Activated B cell treated with CpG ODN at 0.5 μM for 24 hours (primary cell): ENCODE measurements at regions of chr10 and their contacts with region 1.

Region 1: GRCh38 chr10:44857363-44858016 is 53.6 kb upstream of the TMEM72 start:
- DNase-seq: peak; percentile 38
- ATAC-seq: peak; percentile 78
- H3K4me3 Mint-ChIP-seq: no peak overlapping the region
- H3K27ac Mint-ChIP-seq: no peak overlapping the region
- H3K4me1 Mint-ChIP-seq: no peaks in the 10 kb centered on the region
- H3K27me3 Mint-ChIP-seq: peaks cover 8% of the 10 kb centered on the region
- CTCF ChIP-seq: peak; percentile 93

Region 2: DNA sequence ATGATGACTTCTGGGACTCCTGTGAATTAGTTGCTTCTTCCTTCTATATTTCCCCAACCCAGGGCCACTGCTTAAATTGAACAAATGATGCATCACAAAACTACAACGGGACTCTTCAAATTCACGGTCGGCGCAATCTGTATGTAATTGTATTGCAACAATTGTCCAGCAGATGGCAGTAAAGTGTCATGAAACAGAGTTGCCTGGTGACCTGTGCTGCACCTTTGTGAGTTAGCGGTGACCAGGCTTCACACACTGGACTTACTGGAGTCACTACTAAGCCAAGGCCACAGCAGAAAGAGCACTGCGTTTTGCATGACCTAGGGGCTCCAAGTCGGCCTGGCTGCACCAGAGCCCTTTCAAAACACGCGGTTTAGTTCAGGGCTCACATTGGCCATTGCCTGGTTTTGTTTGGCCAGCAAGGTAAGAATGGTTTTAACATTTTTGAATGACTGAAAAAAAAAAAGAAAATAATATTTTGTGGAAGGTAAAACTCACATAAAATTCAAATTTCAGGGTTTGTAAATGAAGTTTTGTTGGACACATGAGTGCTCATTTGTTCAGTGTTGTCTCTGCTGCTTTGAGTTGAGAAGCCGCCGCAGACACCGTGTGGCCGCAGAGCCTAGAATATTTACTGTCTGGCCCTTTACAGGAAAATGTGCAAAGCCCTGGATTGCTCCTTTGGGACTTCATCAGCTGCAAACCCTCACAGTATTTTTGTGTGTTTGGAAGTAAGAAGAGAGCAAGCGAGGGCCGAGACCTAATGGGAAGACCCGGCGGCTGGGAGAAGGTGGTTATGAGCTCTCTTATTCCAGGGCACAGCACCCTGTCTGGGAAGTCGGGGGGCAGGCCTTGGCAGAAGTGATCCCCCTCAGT is 1185.6 kb before region 1 on chr10:
- CTCF ChIA-PET with region 1: interaction called, 3 read pairs
- POLR2A ChIA-PET with region 1: no interaction called
- intact Hi-C with region 1: loop called (anchors 1 kb)
- DNase-seq: no peak
- ATAC-seq: peak; percentile 56
- H3K4me3 Mint-ChIP-seq: no peak overlapping the region
- H3K27ac Mint-ChIP-seq: no peak overlapping the region
- H3K4me1 Mint-ChIP-seq: peaks cover 2% of the 10 kb centered on the region
- H3K27me3 Mint-ChIP-seq: peaks cover 40% of the 10 kb centered on the region
- CTCF ChIP-seq: peak; percentile 76

Region 3: DNA sequence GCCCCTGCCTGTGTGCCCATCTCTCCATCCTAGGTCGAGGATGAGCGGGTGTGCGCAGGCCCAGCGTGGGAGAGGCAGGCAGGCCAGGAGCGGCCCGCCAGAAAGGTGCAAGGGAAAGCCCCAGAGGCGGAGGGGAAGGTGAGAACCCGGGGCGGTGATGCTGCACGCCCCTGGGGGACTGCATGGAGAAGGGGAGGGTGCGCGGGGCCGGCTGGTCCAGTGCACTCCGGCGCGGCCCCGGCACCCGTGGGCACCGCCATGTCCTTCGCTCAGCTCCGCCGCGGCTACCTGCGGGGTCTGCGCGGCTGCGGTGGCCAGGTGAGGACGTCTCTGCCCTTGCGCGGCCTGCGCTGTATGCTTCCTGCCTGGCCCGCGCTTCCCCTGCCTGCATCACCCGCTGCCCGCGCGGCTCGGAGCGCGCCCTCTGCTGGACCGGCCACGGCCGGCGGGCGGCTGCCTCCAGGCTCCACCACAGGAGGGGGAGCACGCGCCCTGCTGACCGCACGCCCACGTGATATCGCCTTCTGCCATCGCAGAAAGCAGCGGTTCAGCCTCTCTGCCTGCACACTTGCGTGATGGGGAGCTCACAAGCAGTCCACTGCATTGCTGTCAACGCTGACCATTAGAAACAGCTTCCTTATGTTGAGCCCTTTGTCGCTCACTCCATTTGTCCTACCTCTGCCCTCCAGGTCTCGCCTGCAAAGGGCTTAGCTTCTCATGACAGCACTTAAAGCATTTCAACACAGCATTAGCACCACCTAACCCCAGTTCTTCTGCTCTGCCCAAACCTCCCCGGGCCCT is 546.5 kb before region 1 on chr10:
- CTCF ChIA-PET with region 1: no interaction called
- POLR2A ChIA-PET with region 1: no interaction called
- intact Hi-C with region 1: loop called (anchors 2 kb)
- DNase-seq: peak; percentile 36
- ATAC-seq: peak; percentile 82
- H3K4me3 Mint-ChIP-seq: peak overlapping the region; percentile 25
- H3K27ac Mint-ChIP-seq: no peak overlapping the region
- H3K4me1 Mint-ChIP-seq: peaks cover 4% of the 10 kb centered on the region
- H3K27me3 Mint-ChIP-seq: peaks cover 13% of the 10 kb centered on the region
- CTCF ChIP-seq: no peak

Region 4: GRCh38 chr10:44386546-44387052 is 470.9 kb before region 1 on chr10:
- CTCF ChIA-PET with region 1: no interaction called
- POLR2A ChIA-PET with region 1: no interaction called
- intact Hi-C with region 1: loop called (anchors 5 kb)
- DNase-seq: no peak
- ATAC-seq: no peak
- H3K4me3 Mint-ChIP-seq: no peak overlapping the region
- H3K27ac Mint-ChIP-seq: no peak overlapping the region
- H3K4me1 Mint-ChIP-seq: peaks cover 7% of the 10 kb centered on the region
- H3K27me3 Mint-ChIP-seq: peaks cover 28% of the 10 kb centered on the region
- CTCF ChIP-seq: no peak

Region 5: GRCh38 chr10:44898635-44899034 is 41.1 kb after region 1 on chr10:
- CTCF ChIA-PET with region 1: no interaction called
- POLR2A ChIA-PET with region 1: no interaction called
- intact Hi-C with region 1: no loop called
- DNase-seq: no peak
- ATAC-seq: no peak
- H3K4me3 Mint-ChIP-seq: no peak overlapping the region
- H3K27ac Mint-ChIP-seq: no peak overlapping the region
- H3K4me1 Mint-ChIP-seq: no peaks in the 10 kb centered on the region
- H3K27me3 Mint-ChIP-seq: peaks cover 3% of the 10 kb centered on the region
- CTCF ChIP-seq: no peak